GM12878 (cell line): ENCODE measurements at regions of chr1 and their contacts with region 1.

Region 1: DNA sequence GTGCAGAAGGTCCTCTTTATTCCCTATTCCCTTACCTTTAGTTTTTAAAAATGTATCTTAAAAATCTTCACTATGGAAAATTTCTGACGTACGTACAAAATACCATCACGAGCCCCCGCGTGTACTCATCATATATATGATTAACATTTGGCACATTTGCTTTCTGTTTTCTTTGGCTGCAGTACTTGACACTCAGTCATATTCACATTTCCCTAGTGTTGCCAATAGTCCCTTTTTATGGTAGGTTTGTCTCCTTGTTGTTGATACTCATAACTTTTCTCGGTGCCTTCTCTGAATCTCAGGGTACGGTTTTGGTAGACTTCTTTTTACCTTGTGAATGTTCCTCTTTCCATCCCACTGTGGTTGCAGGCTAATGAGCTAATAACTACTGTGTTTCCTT is 23.3 kb downstream of the KDM4A start:
- DNase-seq: no peak
- ATAC-seq: no peak
- H3K4me3 ChIP-seq: no peak overlapping the region
- H3K27ac ChIP-seq: no peak overlapping the region
- H3K4me1 ChIP-seq: no peaks in the 10 kb centered on the region
- H3K27me3 ChIP-seq: no peaks in the 10 kb centered on the region
- CTCF ChIP-seq: no peak
- EP300 ChIP-seq: no peak
- POLR2A ChIP-seq: no peak
- RAD21 ChIP-seq: no peak

Region 2: GRCh38 chr1:43634721-43635120 is 38.5 kb before region 1 on chr1:
- CTCF ChIA-PET with region 1: no interaction called
- POLR2A ChIA-PET with region 1: no interaction called
- RAD21 ChIA-PET with region 1: no interaction called
- SMC1A ChIA-PET with region 1: no interaction called
- in situ Hi-C with region 1: no loop called
- intact Hi-C with region 1: loop called (anchors 1 kb)
- DNase-seq: no peak
- ATAC-seq: no peak
- H3K4me3 ChIP-seq: no peak overlapping the region
- H3K27ac ChIP-seq: no peak overlapping the region
- H3K4me1 ChIP-seq: no peaks in the 10 kb centered on the region
- H3K27me3 ChIP-seq: no peaks in the 10 kb centered on the region
- CTCF ChIP-seq: no peak
- EP300 ChIP-seq: no peak
- POLR2A ChIP-seq: no peak
- RAD21 ChIP-seq: no peak

Region 3: DNA sequence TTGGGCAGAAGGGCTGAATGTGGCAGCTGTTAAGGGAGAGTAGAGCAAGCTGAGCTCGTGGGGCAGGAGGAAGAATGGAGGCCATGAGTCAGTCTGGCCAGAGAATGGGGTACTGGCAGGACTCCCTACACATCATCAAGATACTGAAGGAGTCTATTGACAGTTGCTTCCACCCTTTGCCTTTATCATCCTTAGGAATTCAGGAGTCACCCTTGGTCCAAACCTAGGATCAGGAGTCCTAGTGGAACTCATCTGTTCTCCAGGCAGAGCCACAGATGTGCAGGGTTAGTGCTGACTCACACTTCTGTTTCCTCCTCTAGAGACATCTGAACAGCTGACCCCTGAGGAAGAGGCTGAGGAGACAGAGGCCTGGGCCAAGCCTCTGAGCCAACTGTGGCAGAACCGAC is 15.3 kb after region 1 on chr1:
- CTCF ChIA-PET with region 1: no interaction called
- POLR2A ChIA-PET with region 1: no interaction called
- RAD21 ChIA-PET with region 1: no interaction called
- SMC1A ChIA-PET with region 1: no interaction called
- in situ Hi-C with region 1: no loop called
- intact Hi-C with region 1: no loop called
- DNase-seq: no peak
- ATAC-seq: no peak
- H3K4me3 ChIP-seq: no peak overlapping the region
- H3K27ac ChIP-seq: no peak overlapping the region
- H3K4me1 ChIP-seq: no peaks in the 10 kb centered on the region
- H3K27me3 ChIP-seq: no peaks in the 10 kb centered on the region
- CTCF ChIP-seq: no peak
- EP300 ChIP-seq: no peak
- POLR2A ChIP-seq: no peak
- RAD21 ChIP-seq: no peak